Left ventricle myocardium superior (tissue), 1 donor: ENCODE measurements at regions of chr3 and their contacts with region 1.

Region 1: DNA sequence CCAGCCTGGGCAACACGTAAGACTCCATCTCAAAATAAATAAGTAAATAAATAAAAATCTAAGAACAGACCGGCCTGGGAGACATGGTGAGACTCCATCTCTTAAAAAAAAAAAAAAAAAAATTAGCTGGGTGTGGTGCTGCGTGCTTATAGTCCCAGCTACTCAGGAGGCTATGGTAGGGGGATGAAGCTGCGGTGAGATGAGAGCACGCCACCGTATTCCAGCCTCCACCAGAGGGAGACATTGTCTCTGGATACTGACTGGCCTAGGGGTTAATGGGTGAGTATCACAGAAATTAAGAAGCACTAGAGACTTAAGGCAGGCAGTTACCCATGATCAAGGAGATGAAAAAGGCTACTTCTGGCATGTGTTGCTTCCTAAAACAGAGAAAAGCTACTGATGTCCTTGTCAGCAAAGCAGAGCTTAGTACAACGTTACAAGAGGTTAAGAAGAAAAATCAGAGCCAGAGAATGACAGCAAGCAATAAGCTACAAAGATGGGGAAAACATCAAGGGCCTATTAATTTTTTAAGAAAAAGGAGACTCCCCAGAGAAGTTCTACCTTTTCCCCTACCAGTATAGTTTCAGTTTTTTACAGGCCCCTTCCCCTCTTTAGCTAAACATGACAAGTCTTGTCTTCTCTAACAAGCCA is 8.6 kb downstream of the TFRC start:
- DNase-seq: no peak
- ATAC-seq: peak; percentile 88

Region 2: DNA sequence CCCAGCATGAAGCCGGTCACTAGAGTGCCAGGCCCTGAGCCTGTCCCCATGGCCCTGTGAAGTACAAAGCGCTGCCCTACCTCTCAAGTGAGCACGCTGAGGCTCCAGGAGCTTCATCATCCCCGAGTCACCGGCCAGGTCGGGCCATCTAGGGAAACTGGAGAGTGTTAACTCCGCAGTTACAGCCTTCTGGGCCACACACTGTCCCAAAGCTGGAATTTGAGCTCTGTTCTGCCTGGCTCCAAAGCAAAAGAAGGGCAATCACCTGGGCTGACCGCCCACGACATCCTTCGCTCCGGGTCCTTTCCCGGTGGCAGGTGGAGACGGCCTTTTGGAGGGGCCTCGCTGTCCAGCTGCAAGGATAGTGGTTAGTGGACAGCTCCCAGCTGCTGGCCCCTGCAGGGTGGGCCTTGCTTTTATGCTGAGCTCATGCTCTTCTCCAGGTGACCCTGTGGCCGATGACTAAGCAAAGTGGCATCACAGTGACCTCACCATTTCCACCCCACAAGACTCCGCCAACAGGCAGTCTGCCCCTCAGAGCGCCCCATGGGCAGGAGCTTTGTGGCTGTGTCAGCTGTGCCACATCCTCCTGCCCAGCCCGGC is 258.0 kb before region 1 on chr3:
- intact Hi-C with region 1: no loop called
- DNase-seq: no peak
- ATAC-seq: no peak

Region 3: DNA sequence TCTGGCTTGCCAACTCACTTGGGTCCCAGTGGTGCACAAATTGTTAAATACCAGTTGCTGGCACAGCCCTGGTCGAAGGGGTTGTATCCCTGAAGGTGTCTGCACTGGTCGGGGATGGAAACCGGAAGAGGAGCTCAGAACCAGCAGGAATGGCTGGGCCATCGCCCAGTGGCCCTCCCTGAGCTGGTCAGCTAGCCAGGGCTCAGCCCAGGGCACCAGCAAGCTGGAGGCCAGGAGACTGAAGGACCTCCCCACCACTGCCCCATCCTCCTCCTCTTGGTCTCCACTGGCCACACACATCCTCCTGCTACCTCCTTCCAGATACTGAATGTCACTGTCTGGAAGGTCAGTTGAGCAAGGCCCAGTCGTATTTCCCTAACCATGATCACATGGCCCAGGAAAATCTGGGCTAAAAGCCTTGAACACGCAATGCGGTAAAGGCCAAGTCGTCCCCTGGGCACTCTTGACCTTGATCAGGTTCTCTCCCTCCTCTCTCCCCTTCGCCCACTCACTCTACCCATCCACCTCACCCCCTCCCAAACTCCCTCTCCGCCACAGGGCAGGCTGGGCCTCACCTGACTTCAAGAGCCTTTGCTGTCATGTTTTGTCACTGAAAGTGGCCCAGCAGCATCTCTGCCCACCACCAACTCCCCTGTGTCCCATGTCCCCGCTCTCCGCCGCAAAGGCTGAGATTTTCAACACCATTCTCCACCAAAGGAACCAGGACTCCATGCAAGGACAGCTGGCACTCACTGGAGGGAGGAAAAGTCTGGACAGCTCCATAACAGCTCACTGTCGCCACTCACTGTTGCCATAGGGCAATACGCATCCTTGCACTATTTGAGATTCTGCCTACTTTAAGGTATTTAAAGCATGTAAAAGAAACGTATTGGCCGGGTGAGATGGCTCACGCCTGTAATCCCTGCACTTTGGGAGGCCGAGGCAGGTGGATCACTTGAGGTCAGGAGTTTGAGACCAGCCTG is 125.7 kb after region 1 on chr3:
- intact Hi-C with region 1: loop called (anchors 5 kb)
- DNase-seq: no peak
- ATAC-seq: no peak

Region 4: GRCh38 chr3:196246612-196247308 is 173.4 kb after region 1 on chr3:
- intact Hi-C with region 1: no loop called
- DNase-seq: no peak
- ATAC-seq: no peak

Region 5: DNA sequence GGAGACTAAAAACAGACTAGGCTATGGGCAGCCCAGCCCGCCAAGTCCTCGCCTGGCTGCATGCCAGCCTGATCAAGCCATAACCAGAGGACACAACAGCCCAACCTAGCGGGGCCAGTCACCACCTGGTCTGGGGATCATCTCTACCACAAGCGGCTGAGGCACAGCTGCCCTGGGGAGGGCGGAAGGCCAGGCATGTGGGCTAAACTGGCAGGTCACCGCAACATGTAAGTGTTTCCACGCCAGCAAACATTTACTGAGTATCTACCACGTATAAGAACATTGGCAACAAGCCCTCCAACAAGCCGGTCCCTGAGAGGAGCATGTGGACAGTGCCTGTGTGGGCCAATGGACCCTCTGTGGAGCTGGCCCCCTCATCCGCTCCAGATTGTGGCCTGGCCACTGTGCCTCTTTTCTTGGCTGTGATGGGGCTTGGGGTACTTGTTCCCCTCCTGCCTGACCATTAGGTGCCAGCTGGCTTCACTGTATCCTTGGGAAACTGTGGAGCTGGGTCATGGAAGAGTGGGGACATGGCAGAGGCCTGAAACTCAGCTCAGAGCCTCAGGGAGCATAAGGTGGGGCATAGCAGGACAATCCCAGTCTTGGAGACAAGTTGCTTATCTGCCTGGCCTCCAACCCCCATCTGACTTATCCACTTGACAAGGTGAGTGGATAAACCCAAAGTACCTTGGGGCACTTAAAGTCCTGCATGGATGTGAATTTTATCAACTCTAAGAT is 349.9 kb after region 1 on chr3:
- intact Hi-C with region 1: no loop called
- DNase-seq: peak; percentile 95
- ATAC-seq: peak; percentile 97